Activated CD4-positive, alpha-beta memory T cell treated with anti-CD3 and anti-CD28 coated beads, Interleukin-2, amount 10 ng/mL, durations not matched to agents 7 days and 5 days (primary cell): ENCODE measurements at regions of chr1 and their contacts with region 1.

Region 1: GRCh38 chr1:11661103-11661502 is 2.9 kb upstream of the FBXO6 start:
- DNase-seq: no peak
- H3K4me3 Mint-ChIP-seq: no peak overlapping the region
- H3K27ac Mint-ChIP-seq: no peak overlapping the region
- H3K4me1 Mint-ChIP-seq: peaks cover 15% of the 10 kb centered on the region
- H3K27me3 Mint-ChIP-seq: no peaks in the 10 kb centered on the region

Region 2: DNA sequence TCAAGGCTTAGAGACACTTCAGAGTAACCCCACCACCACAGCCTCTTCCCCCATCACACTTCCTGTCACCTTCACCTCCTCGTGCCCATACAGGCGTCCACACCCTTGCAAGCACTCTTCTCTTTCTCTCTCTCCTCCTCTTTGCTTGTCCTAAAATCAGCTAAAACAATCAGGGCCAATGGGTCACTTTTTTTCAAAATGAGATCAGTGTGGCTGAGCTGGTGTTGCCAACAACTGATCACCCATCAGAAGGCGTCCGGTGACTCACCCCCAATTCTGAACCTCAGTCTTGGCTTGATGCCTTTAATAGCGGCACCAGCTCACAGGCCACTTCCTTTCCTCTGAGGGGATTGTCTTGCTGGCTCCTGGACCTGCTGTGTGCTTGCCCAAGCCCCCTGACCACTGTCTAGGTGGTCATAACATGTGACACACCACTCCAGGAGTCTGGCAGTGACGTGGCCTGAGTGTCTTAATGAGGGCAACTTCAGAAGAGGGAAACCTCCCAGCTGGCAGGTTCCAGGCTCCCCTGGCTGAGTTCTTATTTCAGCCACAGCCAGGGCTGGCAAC is 32.0 kb after region 1 on chr1:
- CTCF ChIA-PET with region 1: interaction called, 10 read pairs
- POLR2A ChIA-PET with region 1: interaction called, 18 read pairs
- DNase-seq: peak; percentile 72
- H3K4me3 Mint-ChIP-seq: peak overlapping the region; percentile 28
- H3K27ac Mint-ChIP-seq: peak overlapping the region; percentile 23
- H3K4me1 Mint-ChIP-seq: peaks cover 31% of the 10 kb centered on the region
- H3K27me3 Mint-ChIP-seq: peaks cover 49% of the 10 kb centered on the region

Region 3: DNA sequence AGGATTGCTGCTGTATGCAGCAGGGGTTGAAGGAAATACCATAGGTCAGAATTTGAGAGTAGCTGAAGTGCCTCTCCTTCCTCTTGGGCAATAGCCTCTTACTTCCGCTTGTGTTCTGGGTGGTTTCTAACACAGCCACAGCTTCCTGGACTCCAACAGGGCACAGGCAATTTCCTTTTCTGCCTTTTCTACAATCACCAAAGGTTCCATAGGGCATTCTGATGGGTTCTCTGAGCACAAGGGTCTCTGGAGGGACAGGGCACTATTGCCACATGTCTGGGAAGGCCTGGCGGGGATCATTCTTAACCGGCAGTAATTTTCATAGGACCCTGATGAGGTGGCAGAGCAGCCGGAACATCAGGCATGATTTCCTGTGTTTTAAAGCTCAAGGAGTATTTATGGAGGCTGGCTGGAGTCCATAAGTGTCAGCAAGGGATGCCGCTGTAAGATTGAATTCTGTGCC is 69.4 kb after region 1 on chr1:
- CTCF ChIA-PET with region 1: interaction called, 19 read pairs
- POLR2A ChIA-PET with region 1: interaction called, 15 read pairs
- DNase-seq: peak; percentile 71
- H3K4me3 Mint-ChIP-seq: peak overlapping the region; percentile 66
- H3K27ac Mint-ChIP-seq: peak overlapping the region; percentile 88
- H3K4me1 Mint-ChIP-seq: peaks cover 50% of the 10 kb centered on the region
- H3K27me3 Mint-ChIP-seq: no peaks in the 10 kb centered on the region

Region 4: GRCh38 chr1:11735854-11736745 is 75.0 kb after region 1 on chr1 and contains the start of gene AGTRAP:
- CTCF ChIA-PET with region 1: interaction called, 19 read pairs
- POLR2A ChIA-PET with region 1: interaction called, 12 read pairs
- DNase-seq: peak; percentile 92
- H3K4me3 Mint-ChIP-seq: peak within 1 kb of the TSS; percentile 98
- H3K27ac Mint-ChIP-seq: peak within 1 kb of the TSS; percentile 86
- H3K4me1 Mint-ChIP-seq: peaks cover 69% of the 10 kb centered on the region
- H3K27me3 Mint-ChIP-seq: no peaks in the 10 kb centered on the region
- total RNA-seq, gene AGTRAP: 52.7 to 57.3 TPM

Region 5: GRCh38 chr1:11749203-11749689 is 88.1 kb after region 1 on chr1:
- CTCF ChIA-PET with region 1: interaction called, 10 read pairs
- POLR2A ChIA-PET with region 1: interaction called, 4 read pairs
- DNase-seq: peak; percentile 78
- H3K4me3 Mint-ChIP-seq: no peak overlapping the region
- H3K27ac Mint-ChIP-seq: peak overlapping the region; percentile 74
- H3K4me1 Mint-ChIP-seq: peaks cover 42% of the 10 kb centered on the region
- H3K27me3 Mint-ChIP-seq: no peaks in the 10 kb centered on the region